ENCODE measurements at regions of chr6 and their contacts with region 1.

Region 1: DNA sequence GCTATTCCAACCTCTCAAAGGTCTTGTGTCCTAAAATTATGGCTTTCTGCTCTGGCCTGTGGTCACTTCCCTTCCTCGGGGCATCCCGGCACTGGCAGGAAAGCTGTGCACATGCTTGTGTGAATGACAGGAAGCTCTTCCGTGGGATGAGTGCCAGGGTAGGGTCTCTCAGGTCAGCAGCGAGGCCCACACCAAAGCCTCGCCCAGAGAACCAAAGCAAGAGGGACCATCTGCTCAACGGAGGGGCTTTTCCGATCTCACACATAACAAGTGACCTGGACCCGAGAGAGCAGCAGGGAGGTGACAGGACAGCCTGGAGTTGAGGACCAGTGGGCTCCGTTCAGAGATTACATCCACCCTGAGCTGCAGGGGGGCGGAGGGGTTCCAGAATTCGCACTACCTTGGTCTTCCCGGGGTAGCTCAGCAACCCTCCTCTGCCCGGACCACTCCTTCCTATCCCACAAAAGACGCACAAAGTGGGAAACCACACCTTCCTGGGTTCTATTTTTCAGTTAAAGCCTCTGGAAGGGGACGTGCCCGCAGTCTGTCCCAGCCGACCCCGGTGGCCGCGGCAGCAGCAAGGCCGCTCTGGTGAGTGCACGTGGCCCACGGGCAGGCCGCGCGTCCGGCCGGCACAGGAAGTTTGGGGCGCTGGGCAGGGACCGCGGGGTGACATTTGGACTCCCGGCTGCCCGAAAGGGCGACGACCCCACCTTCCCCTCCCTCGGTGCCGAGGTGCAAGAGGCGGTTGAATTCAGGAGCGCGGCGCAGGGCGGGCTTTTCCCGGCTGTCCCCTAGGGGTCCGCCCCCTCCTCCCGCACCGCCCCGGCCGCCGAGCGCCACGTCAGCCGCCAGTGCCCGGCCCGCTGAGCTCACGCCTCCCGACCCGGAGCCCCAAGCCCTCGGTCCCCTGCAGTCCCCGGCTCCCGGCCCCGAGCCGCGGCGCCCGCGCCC is 988 bp downstream of the TXNDC5 start:
- DNase-seq: peak; percentile 81
- ATAC-seq: peak; percentile 69

Region 2: DNA sequence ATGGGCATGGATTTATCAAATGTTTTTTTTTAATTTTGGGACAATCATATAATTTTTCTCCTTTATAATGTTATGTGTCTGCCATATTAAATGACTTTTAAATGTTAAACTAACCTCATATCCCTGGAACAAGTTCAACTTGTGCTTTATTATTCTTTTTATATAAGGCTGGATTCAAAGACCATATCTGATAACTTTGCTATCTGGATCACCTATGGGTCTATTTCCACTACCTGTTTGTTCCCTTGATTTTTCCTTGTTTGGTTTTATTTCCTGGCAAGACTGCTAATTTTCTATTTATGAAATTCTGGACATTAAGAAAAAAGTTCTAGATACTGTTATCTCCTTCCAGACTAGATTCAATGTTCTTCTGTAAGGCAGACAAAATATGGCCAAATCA is 57.8 kb before region 1 on chr6:
- intact Hi-C with region 1: no loop called
- DNase-seq: no peak
- ATAC-seq: no peak

Region 3: GRCh38 chr6:7975764-7976146 is 66.2 kb after region 1 on chr6:
- intact Hi-C with region 1: no loop called
- DNase-seq: peak; percentile 67
- ATAC-seq: peak; percentile 84

Region 4: DNA sequence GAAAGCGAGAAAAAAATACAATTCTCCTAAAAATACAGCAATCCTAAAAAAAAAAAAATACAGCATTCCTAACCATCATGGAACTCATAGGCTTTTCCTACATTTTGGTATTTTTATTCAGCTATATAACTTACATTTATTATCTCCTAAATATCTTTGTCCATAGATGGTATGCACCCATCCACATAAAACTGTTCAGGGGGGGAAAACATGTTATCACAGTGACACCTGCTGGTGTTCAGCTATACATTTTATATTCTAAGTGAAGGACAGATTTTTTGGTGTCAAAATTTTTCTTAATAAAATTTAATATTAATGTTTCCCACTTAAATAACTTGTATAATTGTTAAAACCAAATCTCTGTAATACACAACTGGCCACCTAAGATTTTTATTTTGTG is 96.6 kb after region 1 on chr6:
- intact Hi-C with region 1: loop called (anchors 10 kb)
- DNase-seq: no peak
- ATAC-seq: peak; percentile 70

Region 5: GRCh38 chr6:8195040-8195713 is 285.6 kb after region 1 on chr6:
- intact Hi-C with region 1: no loop called
- DNase-seq: no peak
- ATAC-seq: no peak

Region 6: DNA sequence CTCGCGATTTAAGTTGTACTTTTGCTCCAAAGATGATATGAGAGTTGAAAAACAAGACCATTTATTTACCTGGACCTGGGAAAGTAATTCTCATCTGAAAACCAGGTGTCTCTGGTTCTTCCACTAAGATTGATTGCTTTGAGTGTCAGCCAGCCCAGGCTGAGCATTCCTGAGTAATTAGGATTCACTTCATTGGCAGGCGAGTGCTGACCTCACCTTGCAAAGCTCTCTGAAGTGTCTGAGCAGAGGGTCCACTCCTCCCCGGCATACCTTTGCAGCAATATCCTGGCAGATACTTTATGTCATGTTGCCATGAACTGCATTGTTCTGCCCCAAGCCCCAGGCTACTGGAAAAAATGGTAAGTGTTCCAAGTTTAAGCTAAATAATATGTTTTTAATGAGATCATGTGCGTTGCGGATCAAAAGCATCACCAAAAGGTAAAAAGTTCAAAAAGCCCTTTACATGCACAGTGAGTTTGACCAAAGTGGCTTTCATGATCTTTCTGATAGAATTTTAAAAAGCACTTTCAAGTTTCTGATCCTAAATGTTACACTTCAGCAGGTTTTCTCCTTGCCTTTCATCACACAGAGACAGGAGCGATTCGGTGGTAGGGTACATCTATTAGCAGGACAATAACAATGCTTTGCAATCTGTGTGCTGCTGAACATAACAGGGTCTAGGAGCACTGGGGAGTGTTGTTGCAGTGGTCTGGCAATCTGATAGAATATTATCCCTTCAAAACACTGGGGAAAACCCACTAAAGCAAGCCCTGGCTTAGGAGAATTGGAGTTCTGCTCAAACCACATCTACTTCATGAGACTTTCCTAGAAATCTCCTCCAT is 320.5 kb after region 1 on chr6:
- intact Hi-C with region 1: no loop called
- DNase-seq: no peak
- ATAC-seq: no peak

Measured in left ventricle myocardium superior (tissue), 1 donor.